AG04449 (cell line): ENCODE measurements at regions of chr6 and their contacts with region 1.

Region 1: GRCh38 chr6:45946352-45946751 is 69.3 kb downstream of the CLIC5 start:
- DNase-seq: no peak
- H3K4me3 ChIP-seq: no peak overlapping the region
- CTCF ChIP-seq: peak; percentile 77

Region 2: GRCh38 chr6:45959534-45960145 is 13.3 kb after region 1 on chr6:
- CTCF ChIA-PET with region 1: interaction called, 19 read pairs
- POLR2A ChIA-PET with region 1: no interaction called
- DNase-seq: no peak
- H3K4me3 ChIP-seq: no peak overlapping the region
- CTCF ChIP-seq: no peak

Region 3: DNA sequence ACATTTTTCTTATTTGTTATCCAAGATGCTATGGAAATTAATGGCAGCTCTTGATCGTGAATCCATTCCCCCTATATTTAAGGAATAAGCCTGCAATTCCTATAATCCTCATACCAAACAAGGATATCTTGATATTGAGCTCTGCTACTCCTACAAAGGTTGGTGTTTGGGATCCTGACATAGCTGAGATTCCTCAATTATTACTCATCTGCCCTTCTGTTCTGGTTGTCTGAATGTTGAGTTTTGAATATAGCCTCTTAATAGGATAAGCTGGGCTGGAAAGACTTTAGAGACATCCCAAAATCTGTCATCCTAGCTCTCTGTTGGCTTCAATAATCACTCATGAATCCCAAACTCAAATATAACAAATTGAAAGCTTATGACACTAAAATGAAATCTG is 19.4 kb after region 1 on chr6:
- CTCF ChIA-PET with region 1: interaction called, 16 read pairs
- POLR2A ChIA-PET with region 1: no interaction called
- DNase-seq: no peak
- H3K4me3 ChIP-seq: no peak overlapping the region
- CTCF ChIP-seq: no peak

Region 4: DNA sequence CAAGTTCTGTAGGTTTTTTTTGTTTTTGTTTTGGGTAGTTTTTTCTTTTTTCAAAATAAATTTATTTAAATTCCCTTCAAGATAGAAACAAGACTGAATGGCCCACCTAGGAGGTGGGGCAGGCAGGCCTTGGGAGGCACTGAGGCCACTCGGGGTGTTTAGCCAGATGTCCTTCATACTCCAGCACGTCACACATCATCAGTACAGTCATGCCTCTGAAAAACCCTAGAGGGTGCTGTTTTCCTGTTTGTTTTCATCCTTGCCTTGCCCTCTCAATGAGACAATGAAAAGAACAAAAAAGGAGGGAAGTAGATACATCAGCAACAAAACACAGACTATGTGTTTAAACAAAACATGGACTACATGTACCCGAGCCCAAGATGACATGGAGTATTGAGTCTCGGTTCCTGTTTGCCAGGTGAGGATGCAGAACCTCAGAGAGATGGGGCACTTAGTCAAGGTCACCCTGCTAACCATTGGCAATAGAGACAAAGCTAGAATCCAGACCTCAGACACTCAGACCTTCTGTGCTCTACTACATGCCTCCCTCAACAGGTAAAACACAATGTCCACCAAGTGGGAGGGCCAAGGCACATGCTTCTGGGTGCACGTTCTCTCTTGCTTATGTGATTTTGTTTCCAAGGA is 96.1 kb after region 1 on chr6:
- CTCF ChIA-PET with region 1: no interaction called
- POLR2A ChIA-PET with region 1: no interaction called
- DNase-seq: no peak
- H3K4me3 ChIP-seq: no peak overlapping the region
- CTCF ChIP-seq: peak; percentile 22